Endothelial cell of umbilical vein (primary cell): ENCODE measurements at regions of chr1 and their contacts with region 1.

Region 1: DNA sequence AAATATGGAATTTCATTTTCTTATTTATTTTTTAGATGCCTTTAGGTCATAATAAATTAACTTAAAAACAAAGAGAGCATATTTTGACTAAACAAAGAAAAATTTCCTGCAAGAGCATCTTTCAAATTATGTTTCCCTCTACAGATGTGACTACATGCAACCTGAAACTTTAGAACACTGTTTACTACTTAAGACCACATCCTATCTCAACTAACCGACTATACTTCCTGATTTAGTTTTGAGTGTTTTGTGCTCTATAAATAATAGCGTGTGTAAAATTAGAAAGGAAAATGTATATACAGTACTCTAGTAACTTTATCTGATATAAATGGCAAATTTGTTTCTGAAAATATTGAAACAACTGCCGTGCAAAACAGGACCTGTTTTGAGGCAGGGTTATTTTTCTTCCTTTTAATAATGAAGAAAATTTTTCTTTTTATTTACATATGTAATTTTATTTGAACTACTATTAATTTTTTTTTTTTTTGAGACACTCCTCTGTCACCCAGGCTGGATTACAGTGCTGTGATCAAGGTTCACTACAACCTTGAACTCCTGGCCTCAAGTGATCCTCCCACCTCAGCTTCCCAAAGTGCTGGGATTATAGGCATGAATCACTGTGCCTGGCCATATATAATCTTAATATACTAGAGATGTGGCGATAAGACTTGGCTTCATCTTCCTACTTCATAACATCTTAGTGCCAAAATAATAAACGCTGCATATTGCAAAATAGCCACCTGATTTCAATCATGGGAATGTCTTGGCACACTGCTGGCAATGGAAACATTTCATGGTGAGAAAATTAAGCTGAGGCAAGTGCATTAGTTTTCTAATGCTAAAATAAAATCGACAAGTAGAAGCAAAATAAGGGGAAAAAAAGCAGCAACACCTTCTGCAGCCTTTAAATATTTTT is 12.3 kb downstream of the ZRANB2 start:
- DNase-seq: no peak
- H3K4me3 ChIP-seq: no peak overlapping the region
- H3K27ac ChIP-seq: no peak overlapping the region
- H3K4me1 ChIP-seq: no peaks in the 10 kb centered on the region
- H3K27me3 ChIP-seq: no peaks in the 10 kb centered on the region
- CTCF ChIP-seq: no peak
- POLR2A ChIP-seq: no peak

Region 2: GRCh38 chr1:70247768-70248167 is 820.8 kb before region 1 on chr1:
- CTCF ChIA-PET with region 1: no interaction called
- POLR2A ChIA-PET with region 1: no interaction called
- dilution Hi-C with region 1: no loop called
- intact Hi-C with region 1: loop called (anchors 5 kb)
- DNase-seq: no peak
- H3K4me3 ChIP-seq: no peak overlapping the region
- H3K27ac ChIP-seq: no peak overlapping the region
- H3K4me1 ChIP-seq: no peaks in the 10 kb centered on the region
- H3K27me3 ChIP-seq: no peaks in the 10 kb centered on the region
- CTCF ChIP-seq: no peak
- POLR2A ChIP-seq: no peak

Region 3: GRCh38 chr1:71080739-71081696 is 12.4 kb after region 1 on chr1 and contains the start of gene ZRANB2:
- CTCF ChIA-PET with region 1: interaction called, 4 read pairs
- POLR2A ChIA-PET with region 1: no interaction called
- dilution Hi-C with region 1: no loop called
- intact Hi-C with region 1: loop called (anchors 2 kb)
- DNase-seq: peak; percentile 94
- H3K4me3 ChIP-seq: peak within 1 kb of the TSS; percentile 59 to 100 (median 95)
- H3K27ac ChIP-seq: peak within 1 kb of the TSS; percentile 96
- H3K4me1 ChIP-seq: peaks cover 18% of the 10 kb centered on the region
- H3K27me3 ChIP-seq: no peaks in the 10 kb centered on the region
- CTCF ChIP-seq: peak; percentile 73 to 78
- POLR2A ChIP-seq: peak; percentile 88
- total RNA-seq, gene ZRANB2: 77.9 and 84.1 TPM in 2 replicates

Region 4: DNA sequence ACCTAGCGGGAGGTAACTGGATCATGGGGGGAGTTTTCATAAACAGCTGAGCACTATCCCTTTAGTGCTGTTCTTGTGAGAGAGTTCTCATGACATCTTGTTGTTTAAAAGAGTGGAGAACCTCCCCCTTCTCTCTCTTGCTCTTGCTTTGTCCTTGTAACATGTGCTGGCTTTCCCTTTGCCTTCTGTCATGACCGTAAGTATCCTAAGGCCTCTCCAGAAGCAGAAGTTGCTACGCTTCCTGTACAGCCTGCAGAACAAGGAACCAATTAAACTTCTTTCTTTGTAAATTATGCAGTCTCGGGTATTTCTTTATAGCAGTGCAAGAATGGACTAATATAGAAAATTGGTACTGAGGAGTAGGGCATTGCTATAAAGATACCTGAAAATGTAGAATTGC is 698.2 kb after region 1 on chr1:
- CTCF ChIA-PET with region 1: no interaction called
- POLR2A ChIA-PET with region 1: no interaction called
- dilution Hi-C with region 1: no loop called
- intact Hi-C with region 1: no loop called
- DNase-seq: no peak
- H3K4me3 ChIP-seq: no peak overlapping the region
- H3K27ac ChIP-seq: no peak overlapping the region
- H3K4me1 ChIP-seq: no peaks in the 10 kb centered on the region
- H3K27me3 ChIP-seq: no peaks in the 10 kb centered on the region
- CTCF ChIP-seq: no peak
- POLR2A ChIP-seq: no peak